Dendritic cell treated with granulocyte-macrophage colony-stimulating factor and Interleukin-4, amounts not matched to agents 40 ng/mL and 50 ng/mL, for 4 days (primary cell): ENCODE measurements at regions of chr12 and their contacts with region 1.

Region 1: GRCh38 chr12:120469450-120470149 is at the start of gene SRSF9:
- H3K4me3 Mint-ChIP-seq: peak within 1 kb of the TSS; percentile 94
- H3K27ac Mint-ChIP-seq: peak within 1 kb of the TSS; percentile 89
- H3K4me1 Mint-ChIP-seq: peaks cover 61% of the 10 kb centered on the region
- H3K27me3 Mint-ChIP-seq: no peaks in the 10 kb centered on the region

Region 2: DNA sequence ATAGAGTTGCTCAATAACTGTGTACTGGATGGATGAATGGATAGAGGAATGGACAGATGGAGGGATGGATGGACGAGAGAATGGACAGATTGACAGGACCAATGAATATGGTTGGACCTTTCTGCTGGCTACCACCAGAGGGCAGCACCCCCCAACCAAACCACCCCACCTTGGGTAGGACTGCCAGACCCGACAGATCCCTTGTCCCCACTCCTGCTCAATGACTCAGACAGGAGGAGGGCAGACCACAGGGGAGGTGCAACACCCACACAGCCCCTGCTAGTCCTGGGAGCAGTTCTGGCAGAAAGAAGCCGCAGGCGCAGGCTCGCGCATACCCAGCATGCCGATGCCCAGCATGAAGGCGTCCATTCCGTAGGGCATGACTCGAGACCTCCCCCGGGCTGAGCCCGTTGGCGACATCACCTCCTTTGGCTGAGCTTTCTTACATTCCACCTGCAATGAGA is 113.0 kb before region 1 on chr12:
- intact Hi-C with region 1: loop called (anchors 2 kb)
- H3K4me3 Mint-ChIP-seq: no peak overlapping the region
- H3K27ac Mint-ChIP-seq: no peak overlapping the region
- H3K4me1 Mint-ChIP-seq: peaks cover 2% of the 10 kb centered on the region
- H3K27me3 Mint-ChIP-seq: peaks cover 55% of the 10 kb centered on the region

Region 3: DNA sequence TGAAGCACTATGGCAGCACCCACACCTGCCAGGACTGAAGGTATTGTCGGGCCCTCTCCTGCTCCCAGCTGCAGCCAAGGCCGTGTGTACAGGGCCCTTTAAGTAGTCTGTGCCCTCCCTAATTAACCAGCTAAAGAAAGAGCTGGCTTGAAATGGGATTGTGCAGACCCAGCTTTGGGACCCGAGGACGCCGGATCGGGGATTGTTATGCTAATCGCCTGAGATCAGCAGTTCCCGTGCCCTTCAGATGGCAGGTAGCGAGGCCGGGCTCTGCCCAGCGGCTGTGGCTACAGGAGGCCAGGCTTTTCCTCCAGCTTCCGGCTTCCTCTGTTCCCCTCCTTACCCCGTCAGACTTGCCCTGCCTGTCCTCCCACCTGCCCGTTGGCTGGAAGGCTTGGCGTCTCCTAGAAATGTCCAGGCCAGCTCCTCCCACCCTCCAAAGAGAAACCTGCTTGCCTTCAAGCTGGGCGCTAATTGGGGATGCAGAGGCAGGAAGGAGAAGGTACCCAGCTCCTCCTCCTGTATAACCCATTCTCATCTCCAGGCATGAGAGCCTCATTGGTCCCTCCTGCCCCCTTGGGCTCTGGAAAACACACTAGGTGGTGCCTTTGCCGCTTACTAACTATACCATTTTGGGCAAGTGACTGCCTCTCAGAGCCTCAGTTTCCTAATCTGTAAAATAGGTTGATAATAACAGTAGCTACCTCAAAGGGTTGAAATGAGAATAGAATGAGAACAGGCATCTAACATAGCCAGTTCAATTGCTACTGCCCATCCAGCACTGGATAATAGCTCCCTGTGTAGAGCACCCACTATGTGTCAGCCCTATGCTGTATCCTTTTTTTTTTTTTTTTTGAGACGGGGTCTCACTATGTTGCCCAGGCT is 74.9 kb before region 1 on chr12:
- intact Hi-C with region 1: no loop called
- H3K4me3 Mint-ChIP-seq: no peak overlapping the region
- H3K27ac Mint-ChIP-seq: no peak overlapping the region
- H3K4me1 Mint-ChIP-seq: no peaks in the 10 kb centered on the region
- H3K27me3 Mint-ChIP-seq: peaks cover 58% of the 10 kb centered on the region